ENCODE measurements at regions of chr2 and their contacts with region 1.

Region 1: DNA sequence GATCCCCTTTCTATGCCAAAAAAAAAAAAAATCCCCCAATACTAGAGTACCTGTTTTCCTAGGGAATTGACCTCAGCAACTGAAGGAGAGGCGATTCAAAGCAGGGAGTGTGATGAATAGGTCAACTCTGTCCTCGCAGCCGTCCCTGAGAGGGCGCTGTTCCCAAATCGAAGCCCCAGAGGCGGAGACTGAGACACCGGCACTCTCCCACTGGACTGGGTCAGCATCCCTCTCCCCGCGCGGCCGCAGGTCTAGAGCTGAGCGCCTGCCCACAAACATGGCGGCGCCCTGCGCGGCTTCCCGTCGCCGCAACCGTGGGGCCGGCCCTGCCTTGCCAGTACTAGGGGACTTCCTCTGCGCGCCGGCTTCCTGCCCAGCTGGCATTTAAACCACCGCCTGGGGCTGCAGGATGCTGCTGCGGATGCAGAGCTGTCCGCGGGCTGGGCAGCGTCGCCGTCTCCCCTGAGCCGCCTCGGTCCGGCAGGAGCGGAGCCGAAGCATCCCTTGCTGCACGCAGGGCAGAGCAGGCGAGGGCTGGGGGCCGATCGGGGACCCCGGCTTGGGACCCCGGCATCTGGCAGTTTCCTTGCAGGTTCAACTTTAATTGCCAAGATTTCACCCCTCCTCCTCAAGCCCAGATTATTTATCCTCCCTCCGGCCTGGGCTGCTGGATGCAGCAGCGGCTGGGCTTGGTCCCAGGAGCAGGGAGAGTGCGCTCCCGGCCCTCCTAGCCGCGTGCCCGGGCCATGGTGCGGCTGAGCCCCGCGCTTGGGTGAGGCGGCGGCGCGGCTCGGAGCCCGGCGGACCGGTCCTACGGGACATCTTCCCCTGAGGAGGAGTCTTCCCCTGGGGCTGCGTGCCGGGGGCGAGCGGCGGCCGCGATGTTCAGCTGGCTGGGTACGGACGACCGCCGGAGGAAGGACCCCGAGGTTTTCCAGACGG is at the start of gene EHD3:
- DNase-seq: peak; percentile 92 to 93
- ATAC-seq: peak; percentile 99 to 100
- H3K4me3 ChIP-seq: peak within 1 kb of the TSS; percentile 68
- H3K27ac ChIP-seq: peak within 1 kb of the TSS; percentile 80 to 92
- H3K4me1 ChIP-seq: peaks cover 14% of the 10 kb centered on the region; the same call in 2 of the 3 replicates
- CTCF ChIP-seq: peak; percentile 90
- EP300 ChIP-seq: no peak
- POLR2A ChIP-seq: peak; percentile 88
- RAD21 ChIP-seq: peak; percentile 61 to 66
- polyA plus RNA-seq, gene EHD3: 10.6 and 12.3 TPM in 2 replicates

Region 2: GRCh38 chr2:30974554-30974953 is 259.5 kb before region 1 on chr2:
- CTCF ChIA-PET with region 1: no interaction called
- POLR2A ChIA-PET with region 1: no interaction called
- DNase-seq: no peak
- ATAC-seq: no peak
- H3K4me3 ChIP-seq: no peak overlapping the region
- H3K27ac ChIP-seq: no peak overlapping the region
- H3K4me1 ChIP-seq: peaks cover 4% of the 10 kb centered on the region
- CTCF ChIP-seq: no peak
- EP300 ChIP-seq: no peak
- POLR2A ChIP-seq: no peak
- RAD21 ChIP-seq: no peak

Region 3: GRCh38 chr2:31122133-31122532 is 111.9 kb before region 1 on chr2:
- CTCF ChIA-PET with region 1: no interaction called
- POLR2A ChIA-PET with region 1: no interaction called
- DNase-seq: no peak
- ATAC-seq: no peak
- H3K4me3 ChIP-seq: no peak overlapping the region
- H3K27ac ChIP-seq: no peak overlapping the region
- H3K4me1 ChIP-seq: peaks cover 23% of the 10 kb centered on the region
- CTCF ChIP-seq: no peak
- EP300 ChIP-seq: no peak
- POLR2A ChIP-seq: no peak
- RAD21 ChIP-seq: no peak

Region 4: GRCh38 chr2:31253356-31254131 is 19.5 kb after region 1 on chr2:
- CTCF ChIA-PET with region 1: interaction called, 37 read pairs
- POLR2A ChIA-PET with region 1: no interaction called
- DNase-seq: no peak
- ATAC-seq: no peak
- H3K4me3 ChIP-seq: no peak overlapping the region
- H3K27ac ChIP-seq: no peak overlapping the region
- H3K4me1 ChIP-seq: no peaks in the 10 kb centered on the region
- CTCF ChIP-seq: no peak
- EP300 ChIP-seq: no peak
- POLR2A ChIP-seq: no peak
- RAD21 ChIP-seq: no peak

Region 5: GRCh38 chr2:32074134-32074506 is 840.1 kb after region 1 on chr2:
- CTCF ChIA-PET with region 1: no interaction called
- POLR2A ChIA-PET with region 1: no interaction called
- DNase-seq: no peak
- ATAC-seq: no peak; a peak in 1 of 6 replicates
- H3K4me3 ChIP-seq: no peak overlapping the region
- H3K27ac ChIP-seq: no peak overlapping the region
- H3K4me1 ChIP-seq: no peaks in the 10 kb centered on the region
- CTCF ChIP-seq: no peak
- EP300 ChIP-seq: no peak
- POLR2A ChIP-seq: no peak
- RAD21 ChIP-seq: no peak

Measured in A549 (cell line).